Gastrocnemius medialis (tissue), 4 donors: ENCODE measurements at regions of chr12 and their contacts with region 1.

Region 1: DNA sequence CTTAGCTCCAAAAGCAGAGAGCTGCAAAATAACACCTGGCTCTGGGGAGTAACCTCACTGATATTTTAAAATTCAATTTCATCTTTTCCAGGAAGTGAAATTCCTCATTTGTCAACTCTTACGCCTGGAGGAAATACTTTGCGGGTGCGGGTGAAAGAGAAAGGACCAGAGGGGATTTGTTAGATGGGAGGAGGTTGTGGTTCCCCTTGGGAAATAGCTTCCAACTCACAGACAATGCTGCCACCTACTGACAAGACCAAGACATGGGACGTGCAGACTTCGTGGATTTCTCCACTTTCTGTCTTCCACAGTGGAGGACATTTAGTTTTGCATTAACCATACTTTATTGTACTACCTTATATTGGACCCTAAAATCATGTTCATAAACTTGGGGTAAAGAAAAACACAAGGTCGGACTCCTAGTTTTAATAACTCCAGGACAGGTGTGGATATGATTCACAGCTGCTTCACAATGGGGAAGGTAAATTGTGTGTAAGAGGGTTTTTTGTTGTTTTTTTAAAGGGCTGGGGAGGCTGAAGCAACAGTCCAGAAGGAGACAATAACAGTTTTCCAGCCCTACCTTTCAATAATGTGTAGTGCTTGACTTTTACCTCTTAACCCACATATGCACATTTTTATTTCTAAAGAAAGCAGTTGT is 10.8 kb downstream of the FBXL14 start:
- DNase-seq: peak; percentile 38 to 53
- ATAC-seq: peak; percentile 71 to 82
- H3K4me3 ChIP-seq: peak overlapping the region in 2 of 4 donors; percentile 27 to 50
- H3K27ac ChIP-seq: no peak overlapping the region
- H3K4me1 ChIP-seq: peaks cover 8 to 20% of the 10 kb centered on the region in 2 donors
- H3K27me3 ChIP-seq: no peaks in the 10 kb centered on the region
- CTCF ChIP-seq: peak; percentile 72 to 85 (median 83)
- POLR2A ChIP-seq: no peak

Region 2: DNA sequence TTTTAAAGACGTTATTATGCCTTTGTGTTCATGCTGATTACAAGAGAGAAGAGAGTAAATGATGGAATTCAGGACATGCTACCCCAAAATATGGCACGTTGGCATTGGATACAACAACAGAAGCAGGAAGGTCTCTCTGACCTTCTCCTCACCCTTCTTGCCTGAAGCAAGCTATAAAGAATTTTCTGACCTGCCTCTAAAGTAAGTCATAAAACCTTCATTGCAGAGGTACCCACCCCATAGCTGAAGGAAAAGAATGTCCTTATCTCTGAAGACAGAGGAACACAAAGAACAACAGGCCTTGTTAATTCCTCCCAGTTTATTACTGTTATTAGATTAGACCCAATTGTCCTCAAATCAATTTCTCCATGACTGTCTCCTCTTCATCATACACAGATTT is 165.4 kb before region 1 on chr12:
- in situ Hi-C with region 1: no loop called
- intact Hi-C with region 1: no loop called
- DNase-seq: no peak
- ATAC-seq: no peak
- H3K4me3 ChIP-seq: no peak overlapping the region
- H3K27ac ChIP-seq: no peak overlapping the region
- H3K4me1 ChIP-seq: no peaks in the 10 kb centered on the region
- H3K27me3 ChIP-seq: no peaks in the 10 kb centered on the region
- CTCF ChIP-seq: no peak
- POLR2A ChIP-seq: no peak

Region 3: DNA sequence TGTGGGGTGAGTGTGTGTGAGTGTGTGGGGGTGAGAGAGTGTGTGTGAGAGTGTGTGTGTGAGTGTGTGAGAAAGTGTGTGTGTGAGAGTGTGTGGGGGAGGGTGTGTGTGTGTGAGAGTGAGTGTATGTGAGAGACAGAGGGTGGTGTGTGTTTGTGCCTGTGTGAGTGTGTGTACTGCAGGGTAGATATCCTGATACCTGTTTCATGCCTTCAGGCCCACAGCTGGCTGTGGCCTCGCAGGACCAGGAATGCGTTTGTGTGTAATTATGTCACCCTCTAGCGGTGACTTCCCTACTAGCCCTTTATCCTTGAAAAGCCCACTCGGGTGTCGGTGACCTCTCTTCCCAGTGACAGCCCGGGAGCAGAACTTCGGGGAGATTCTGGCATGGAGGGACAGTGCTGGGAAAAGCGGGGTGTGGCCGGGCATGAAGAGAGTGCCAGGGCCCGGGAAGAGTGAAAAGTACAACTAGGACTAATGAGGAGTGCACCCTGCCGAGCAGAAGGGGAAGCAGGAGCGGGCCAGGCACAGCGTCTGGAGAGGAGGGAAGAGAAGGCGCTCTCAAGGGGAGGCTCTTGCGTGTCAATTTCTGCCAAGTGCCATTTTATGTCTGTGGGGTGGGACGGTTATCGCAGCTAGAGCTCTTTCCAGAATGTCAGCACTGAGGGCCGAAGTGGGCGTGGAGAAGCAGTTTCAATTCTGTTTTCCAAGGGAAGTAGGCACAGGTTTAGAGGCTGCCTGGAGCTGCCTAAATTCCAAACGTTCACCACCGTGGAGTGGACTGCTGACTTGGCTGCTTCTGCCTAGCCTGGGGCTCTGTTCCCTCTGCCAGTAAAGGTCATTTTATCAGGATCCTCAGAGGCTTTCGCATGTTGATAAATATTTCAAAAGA is 21.8 kb after region 1 on chr12:
- in situ Hi-C with region 1: no loop called
- intact Hi-C with region 1: loop called (anchors 1 kb)
- DNase-seq: peak; percentile 47 to 59
- ATAC-seq: peak; percentile 80 to 87
- H3K4me3 ChIP-seq: peak overlapping the region; percentile 48 to 69 (median 62)
- H3K27ac ChIP-seq: peak overlapping the region; percentile 75 to 84 (median 80)
- H3K4me1 ChIP-seq: peaks cover 8 to 15% of the 10 kb centered on the region in 2 donors
- H3K27me3 ChIP-seq: no peaks in the 10 kb centered on the region
- CTCF ChIP-seq: peak; percentile 72 to 85 (median 77)
- POLR2A ChIP-seq: no peak

Region 4: DNA sequence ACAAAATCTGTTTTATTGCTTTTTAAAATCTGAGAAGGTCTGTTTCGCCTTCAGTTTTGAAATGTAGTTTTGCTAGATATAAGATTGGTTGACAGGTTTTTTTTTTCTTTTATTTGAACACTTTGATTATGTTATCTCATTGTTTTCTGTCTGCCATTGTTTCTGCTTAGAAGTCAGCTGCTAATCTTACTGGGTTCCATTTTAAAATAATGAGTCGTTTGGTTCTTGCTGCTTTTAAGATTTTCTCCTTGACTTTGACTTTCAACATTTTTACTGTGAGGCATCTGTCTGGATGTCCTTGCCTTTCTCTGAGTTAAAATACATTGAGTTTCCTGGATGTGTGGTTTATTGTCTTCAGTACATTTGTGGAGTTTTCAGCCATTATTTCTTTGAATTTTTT is 164.1 kb after region 1 on chr12:
- in situ Hi-C with region 1: no loop called
- intact Hi-C with region 1: no loop called
- DNase-seq: no peak
- ATAC-seq: no peak
- H3K4me3 ChIP-seq: no peak overlapping the region
- H3K27ac ChIP-seq: no peak overlapping the region
- H3K4me1 ChIP-seq: peaks cover 16 to 23% of the 10 kb centered on the region in 2 donors
- H3K27me3 ChIP-seq: no peaks in the 10 kb centered on the region
- CTCF ChIP-seq: no peak
- POLR2A ChIP-seq: no peak